WTC11 (cell line): ENCODE measurements at regions of chr17 and their contacts with region 1.

Region 1: GRCh38 chr17:3773511-3773910 is 27.5 kb downstream of the ITGAE start:
- DNase-seq: no peak
- ATAC-seq: no peak
- H3K4me3 Mint-ChIP-seq: no peak overlapping the region
- H3K27ac Mint-ChIP-seq: no peak overlapping the region
- H3K4me1 Mint-ChIP-seq: peaks cover 15% of the 10 kb centered on the region
- H3K27me3 Mint-ChIP-seq: no peaks in the 10 kb centered on the region; the same call in 1 of the 2 replicates
- CTCF ChIP-seq: no peak

Region 2: DNA sequence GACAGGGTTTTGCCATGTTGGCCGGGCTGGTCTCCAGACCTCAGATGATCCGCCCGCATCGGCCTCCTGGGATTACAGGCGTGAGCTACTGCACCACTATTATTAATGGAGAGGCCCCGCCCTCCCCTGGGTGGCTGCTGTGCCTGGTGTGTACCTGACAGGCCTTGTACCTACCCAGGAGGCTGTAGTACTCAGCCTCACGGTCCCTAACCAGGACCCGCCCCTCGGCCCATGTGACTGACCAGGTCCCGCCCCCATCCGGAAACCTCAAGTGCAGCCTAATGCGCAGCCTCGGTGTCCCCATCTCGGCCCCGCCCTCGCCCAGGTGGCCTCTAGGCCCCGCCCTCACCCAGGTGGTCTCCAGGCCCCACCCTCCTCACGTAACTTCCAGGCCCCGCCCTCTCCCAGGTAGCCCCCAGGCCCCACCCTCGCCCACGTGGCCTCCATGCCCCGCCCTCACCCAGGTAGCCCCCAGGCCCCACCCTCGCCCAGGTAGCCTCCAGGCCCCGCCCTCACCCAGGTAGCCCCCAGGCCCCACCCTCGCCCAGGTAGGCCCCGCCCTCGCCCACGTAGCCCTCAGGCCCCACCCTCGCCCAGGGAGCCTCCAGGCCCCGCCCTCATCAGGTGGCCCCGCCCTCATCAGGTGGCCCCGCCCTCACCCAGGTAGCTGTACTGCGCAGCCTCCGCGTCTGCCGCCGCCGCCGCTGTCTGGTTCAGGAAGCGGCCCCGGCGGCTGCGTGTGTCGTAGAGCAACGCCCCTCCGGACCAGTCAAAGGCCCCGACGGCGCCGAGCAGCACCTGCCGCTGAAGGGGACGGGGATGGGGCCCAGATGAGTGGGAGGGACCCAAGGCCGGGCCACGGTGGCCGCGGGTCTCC is 18.8 kb before region 1 on chr17:
- CTCF ChIA-PET with region 1: interaction called, 11 read pairs
- POLR2A ChIA-PET with region 1: no interaction called
- DNase-seq: peak; percentile 100
- ATAC-seq: peak; percentile 88
- H3K4me3 Mint-ChIP-seq: peak overlapping the region; percentile 64
- H3K27ac Mint-ChIP-seq: no peak overlapping the region
- H3K4me1 Mint-ChIP-seq: peaks cover 15% of the 10 kb centered on the region
- H3K27me3 Mint-ChIP-seq: peaks cover 2% of the 10 kb centered on the region
- CTCF ChIP-seq: no peak